CD8-positive, alpha-beta memory T cell (primary cell): ENCODE measurements at regions of chr11 and their contacts with region 1.

Region 1: DNA sequence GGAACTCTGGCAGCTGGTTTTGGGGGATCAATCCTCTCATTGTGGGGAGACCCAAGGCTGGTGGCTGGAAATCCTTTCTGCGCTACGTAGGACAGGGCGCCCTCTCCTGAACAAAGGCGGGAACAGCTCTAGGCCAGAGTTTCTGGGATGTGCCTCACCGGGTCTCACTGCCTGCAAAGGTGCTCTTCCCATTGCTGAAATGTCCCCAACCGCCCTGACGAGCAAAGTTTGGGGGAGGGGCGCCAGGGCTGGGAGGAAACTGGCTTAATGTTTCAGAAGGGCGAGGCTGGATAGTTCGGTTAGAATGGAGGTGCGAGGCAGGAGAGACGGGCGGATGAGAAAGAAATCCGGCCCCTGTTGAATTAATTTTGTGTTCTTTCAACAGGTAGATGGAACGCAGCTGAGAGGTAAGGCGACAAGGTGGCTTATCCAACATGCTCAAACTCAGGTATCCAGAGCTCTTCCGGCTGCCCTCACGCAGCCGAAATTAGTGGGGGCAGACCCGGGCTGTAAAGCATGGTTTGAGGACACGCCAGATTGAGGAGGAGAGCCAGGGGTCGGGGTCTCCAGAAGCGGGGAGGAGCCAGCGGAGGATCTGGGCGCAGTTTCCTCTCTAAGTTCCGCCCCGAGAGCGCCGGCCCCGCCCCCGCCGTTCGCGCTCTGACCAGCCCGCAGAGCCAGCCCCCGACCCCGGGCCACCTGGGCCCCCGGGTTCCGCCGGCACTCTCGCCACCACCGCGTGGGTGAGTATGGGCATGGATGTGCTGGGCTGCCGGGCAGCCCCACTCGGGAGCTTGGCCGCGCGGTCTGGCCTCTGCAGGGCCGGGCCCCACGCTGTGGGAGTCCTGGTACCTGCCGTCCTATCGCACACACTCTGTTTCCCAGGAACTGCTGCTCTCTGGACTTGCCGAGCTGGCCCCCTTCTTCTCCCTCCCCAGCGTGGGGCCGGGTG is at the start of gene PGAP2:
- DNase-seq: peak; percentile 45 to 71 (median 54)
- H3K4me3 ChIP-seq: peak within 1 kb of the TSS; percentile 94
- H3K4me3 Mint-ChIP-seq: peak within 1 kb of the TSS; percentile 94 to 99 (median 97)
- H3K27ac ChIP-seq: peak within 1 kb of the TSS; percentile 66
- H3K27ac Mint-ChIP-seq: peak within 1 kb of the TSS; percentile 81 to 97 (median 94)
- H3K4me1 ChIP-seq: peaks cover 9% of the 10 kb centered on the region
- H3K4me1 Mint-ChIP-seq: peaks cover 14 to 16% (median 16%) of the 10 kb centered on the region in 3 donors
- H3K27me3 ChIP-seq: no peaks in the 10 kb centered on the region
- H3K27me3 Mint-ChIP-seq: no peaks in the 10 kb centered on the region
- total RNA-seq, gene PGAP2: 38.9 to 40.2 TPM

Region 2: GRCh38 chr11:3782963-3783362 is 25.2 kb before region 1 on chr11:
- CTCF ChIA-PET with region 1: interaction called, 18 read pairs
- POLR2A ChIA-PET with region 1: interaction called, 4 read pairs
- DNase-seq: no peak
- H3K4me3 ChIP-seq: no peak overlapping the region
- H3K4me3 Mint-ChIP-seq: peak overlapping the region in 1 of 7 donors; percentile 69
- H3K27ac ChIP-seq: no peak overlapping the region
- H3K27ac Mint-ChIP-seq: peak overlapping the region in 6 of 8 donors; percentile 1 to 83 (median 36)
- H3K4me1 ChIP-seq: peaks cover 49% of the 10 kb centered on the region
- H3K4me1 Mint-ChIP-seq: peaks cover 50 to 72% (median 69%) of the 10 kb centered on the region in 3 donors
- H3K27me3 ChIP-seq: no peaks in the 10 kb centered on the region
- H3K27me3 Mint-ChIP-seq: no peaks in the 10 kb centered on the region

Region 3: DNA sequence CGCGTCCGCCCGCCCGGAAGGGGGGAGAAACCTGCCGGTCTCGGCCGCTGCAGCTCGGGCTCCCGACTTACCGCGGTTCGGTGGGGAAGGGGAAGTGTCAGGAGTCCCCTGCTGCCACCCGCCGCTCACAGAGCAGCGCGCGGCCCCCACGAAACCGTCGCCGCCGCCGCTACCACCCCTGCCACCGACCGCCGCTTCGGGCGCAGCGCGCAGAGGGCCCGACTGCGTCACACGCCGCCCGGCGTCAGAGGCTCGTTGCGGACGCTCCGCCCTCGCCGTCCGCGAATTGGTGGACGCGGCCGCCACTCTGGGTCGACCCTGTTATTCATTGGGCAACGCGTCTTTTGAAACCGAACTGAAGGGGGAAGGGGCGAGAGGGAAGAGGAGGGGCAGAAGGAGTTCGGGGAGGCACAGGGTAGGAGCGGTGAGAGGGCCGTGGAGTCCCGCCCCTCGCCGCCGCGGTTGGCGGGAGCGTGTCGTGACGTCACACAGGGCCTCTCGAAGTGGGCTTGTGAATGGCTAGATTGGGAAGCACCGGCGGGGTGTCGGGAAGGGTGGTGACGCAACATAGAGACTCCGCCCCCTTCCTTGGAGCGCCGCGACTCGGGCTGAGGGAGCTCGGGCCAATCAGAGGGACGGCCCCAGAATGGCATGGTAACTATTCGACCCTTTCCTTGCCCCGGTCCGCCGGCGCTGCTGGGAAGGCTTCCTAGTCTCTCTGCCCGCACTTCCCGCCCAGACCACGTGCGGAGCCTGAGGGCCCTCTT is 10.7 kb before region 1 on chr11 and contains the start of gene NUP98:
- CTCF ChIA-PET with region 1: interaction called, 57 read pairs
- POLR2A ChIA-PET with region 1: interaction called, 11 read pairs
- DNase-seq: peak; percentile 99 to 100 (median 100)
- H3K4me3 ChIP-seq: peak within 1 kb of the TSS; percentile 97
- H3K4me3 Mint-ChIP-seq: peak within 1 kb of the TSS; percentile 83 to 98 (median 96)
- H3K27ac ChIP-seq: peak within 1 kb of the TSS; percentile 97
- H3K27ac Mint-ChIP-seq: peak within 1 kb of the TSS; percentile 98 to 100 (median 99)
- H3K4me1 ChIP-seq: peaks cover 33% of the 10 kb centered on the region
- H3K4me1 Mint-ChIP-seq: peaks cover 39 to 58% (median 50%) of the 10 kb centered on the region in 3 donors
- H3K27me3 ChIP-seq: no peaks in the 10 kb centered on the region
- H3K27me3 Mint-ChIP-seq: peaks cover 0 to 2% of the 10 kb centered on the region in 2 donors
- total RNA-seq, gene NUP98: 101 to 105 TPM

Region 4: GRCh38 chr11:3824714-3825472 is 16.7 kb after region 1 on chr11:
- CTCF ChIA-PET with region 1: interaction called, 22 read pairs
- POLR2A ChIA-PET with region 1: no interaction called
- DNase-seq: peak; percentile 70 to 87 (median 74)
- H3K4me3 ChIP-seq: no peak overlapping the region
- H3K4me3 Mint-ChIP-seq: peak overlapping the region in 2 of 7 donors; percentile 35 to 54
- H3K27ac ChIP-seq: no peak overlapping the region
- H3K27ac Mint-ChIP-seq: peak overlapping the region; percentile 63 to 95 (median 90)
- H3K4me1 ChIP-seq: peaks cover 22% of the 10 kb centered on the region
- H3K4me1 Mint-ChIP-seq: peaks cover 25 to 51% (median 37%) of the 10 kb centered on the region in 3 donors
- H3K27me3 ChIP-seq: no peaks in the 10 kb centered on the region
- H3K27me3 Mint-ChIP-seq: no peaks in the 10 kb centered on the region